T-cell (primary cell): ENCODE measurements at regions of chr19 and their contacts with region 1.

Region 1: GRCh38 chr19:52171321-52172169 is at the start of gene ZNF836:
- DNase-seq: peak; percentile 76 to 93 (median 83)
- ATAC-seq: peak; percentile 93 to 96 (median 94)
- H3K4me3 ChIP-seq: peak within 1 kb of the TSS; percentile 91 to 97
- H3K4me3 Mint-ChIP-seq: peak within 1 kb of the TSS; percentile 92 to 93 (median 92)
- H3K27ac ChIP-seq: peak within 1 kb of the TSS; percentile 80
- H3K27ac Mint-ChIP-seq: peak within 1 kb of the TSS; percentile 91 to 97
- H3K4me1 ChIP-seq: peaks cover 7 to 22% of the 10 kb centered on the region in 2 experiments
- H3K4me1 Mint-ChIP-seq: peaks cover 31 to 41% (median 36%) of the 10 kb centered on the region in 3 donors
- H3K27me3 ChIP-seq: no peaks in the 10 kb centered on the region
- H3K27me3 Mint-ChIP-seq: no peaks in the 10 kb centered on the region
- total RNA-seq, gene ZNF836: 27.6 to 43.9 (median 35.0) TPM

Region 2: GRCh38 chr19:52189735-52190486 is 18.4 kb after region 1 on chr19 and contains the start of gene PPP2R1A:
- CTCF ChIA-PET with region 1: interaction called in 1 of 2 experiments, 10 read pairs
- POLR2A ChIA-PET with region 1: interaction called in 1 of 2 experiments, 9 read pairs
- DNase-seq: peak; percentile 87 to 100 (median 99)
- ATAC-seq: peak; percentile 85 to 89 (median 88)
- H3K4me3 ChIP-seq: peak within 1 kb of the TSS; percentile 90 to 91
- H3K4me3 Mint-ChIP-seq: peak within 1 kb of the TSS; percentile 97 to 98 (median 97)
- H3K27ac ChIP-seq: peak within 1 kb of the TSS; percentile 96
- H3K27ac Mint-ChIP-seq: peak within 1 kb of the TSS; percentile 100
- H3K4me1 ChIP-seq: peaks cover 12 to 52% of the 10 kb centered on the region in 2 experiments
- H3K4me1 Mint-ChIP-seq: peaks cover 45 to 56% (median 51%) of the 10 kb centered on the region in 3 donors
- H3K27me3 ChIP-seq: no peaks in the 10 kb centered on the region
- H3K27me3 Mint-ChIP-seq: no peaks in the 10 kb centered on the region
- total RNA-seq, gene PPP2R1A: 177 to 203 (median 191) TPM